ENCODE measurements at regions of chr1 and their contacts with region 1.

Region 1: DNA sequence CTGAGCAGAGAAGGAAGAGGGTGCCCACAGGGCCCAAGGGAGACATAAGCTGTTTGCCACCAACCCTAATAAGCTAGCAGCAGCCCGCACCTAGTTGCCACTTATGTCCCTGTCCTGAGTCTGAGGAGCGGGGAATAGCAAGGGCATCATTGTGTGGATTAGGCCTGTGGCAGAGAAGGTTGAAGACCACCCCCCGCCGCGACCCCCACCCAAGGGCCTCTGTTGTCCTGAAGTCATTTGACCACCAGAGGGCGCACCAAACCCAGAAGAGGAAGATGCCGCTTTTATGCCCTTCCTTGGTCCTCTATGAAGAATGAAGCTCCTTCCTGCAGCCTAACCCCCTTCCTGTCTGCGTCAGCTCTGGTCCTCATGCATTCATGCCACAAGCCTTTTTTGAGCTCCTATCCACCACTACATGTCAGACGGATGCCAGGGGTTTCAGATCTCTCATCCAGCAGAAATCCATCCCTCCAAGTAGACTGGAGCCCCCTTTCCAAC is 16.6 kb downstream of the RHBG start:
- DNase-seq: peak; percentile 58 to 86 (median 74)
- ATAC-seq: peak; percentile 93
- H3K4me3 ChIP-seq: no peak overlapping the region
- H3K4me3 Mint-ChIP-seq: no peak overlapping the region
- H3K27ac ChIP-seq: no peak overlapping the region
- H3K27ac Mint-ChIP-seq: no peak overlapping the region
- H3K4me1 ChIP-seq: peaks cover 13% of the 10 kb centered on the region
- H3K4me1 Mint-ChIP-seq: peaks cover 12% of the 10 kb centered on the region
- H3K27me3 ChIP-seq: peaks cover 16 to 18% of the 10 kb centered on the region in 2 experiments
- H3K27me3 Mint-ChIP-seq: peaks cover 39% of the 10 kb centered on the region
- CTCF ChIP-seq: peak; percentile 90

Region 2: GRCh38 chr1:155717041-155717440 is 668.5 kb before region 1 on chr1:
- CTCF ChIA-PET with region 1: no interaction called
- POLR2A ChIA-PET with region 1: no interaction called
- intact Hi-C with region 1: no loop called
- DNase-seq: no peak
- ATAC-seq: no peak
- H3K4me3 ChIP-seq: no peak overlapping the region
- H3K4me3 Mint-ChIP-seq: no peak overlapping the region
- H3K27ac ChIP-seq: no peak overlapping the region
- H3K27ac Mint-ChIP-seq: no peak overlapping the region
- H3K4me1 ChIP-seq: peaks cover 4% of the 10 kb centered on the region
- H3K4me1 Mint-ChIP-seq: peaks cover 10% of the 10 kb centered on the region
- H3K27me3 ChIP-seq: no peaks in the 10 kb centered on the region
- H3K27me3 Mint-ChIP-seq: no peaks in the 10 kb centered on the region
- CTCF ChIP-seq: no peak

Region 3: DNA sequence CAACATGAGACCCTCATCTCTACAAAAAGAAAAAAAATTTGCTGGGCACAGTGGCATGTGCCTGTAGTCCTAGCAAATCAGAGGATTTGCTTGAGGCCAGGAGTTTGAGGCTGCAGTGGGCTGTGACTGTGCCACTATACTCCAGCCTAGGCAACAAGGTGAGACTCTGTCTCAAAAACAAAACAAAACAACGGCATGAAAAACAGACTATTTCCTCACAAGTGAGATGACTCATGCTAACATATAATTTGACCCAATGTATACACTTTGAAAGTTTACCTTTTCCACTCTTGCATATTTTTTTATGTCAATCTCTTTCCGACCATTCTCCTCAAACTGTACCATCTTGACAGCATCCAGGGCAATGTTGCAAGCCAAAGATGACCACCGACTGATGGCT is 65.0 kb before region 1 on chr1:
- CTCF ChIA-PET with region 1: no interaction called
- POLR2A ChIA-PET with region 1: no interaction called
- intact Hi-C with region 1: no loop called
- DNase-seq: no peak
- ATAC-seq: no peak
- H3K4me3 ChIP-seq: no peak overlapping the region
- H3K4me3 Mint-ChIP-seq: no peak overlapping the region
- H3K27ac ChIP-seq: no peak overlapping the region
- H3K27ac Mint-ChIP-seq: no peak overlapping the region
- H3K4me1 ChIP-seq: no peaks in the 10 kb centered on the region
- H3K4me1 Mint-ChIP-seq: no peaks in the 10 kb centered on the region
- H3K27me3 ChIP-seq: no peaks in the 10 kb centered on the region
- H3K27me3 Mint-ChIP-seq: no peaks in the 10 kb centered on the region
- CTCF ChIP-seq: no peak

Region 4: DNA sequence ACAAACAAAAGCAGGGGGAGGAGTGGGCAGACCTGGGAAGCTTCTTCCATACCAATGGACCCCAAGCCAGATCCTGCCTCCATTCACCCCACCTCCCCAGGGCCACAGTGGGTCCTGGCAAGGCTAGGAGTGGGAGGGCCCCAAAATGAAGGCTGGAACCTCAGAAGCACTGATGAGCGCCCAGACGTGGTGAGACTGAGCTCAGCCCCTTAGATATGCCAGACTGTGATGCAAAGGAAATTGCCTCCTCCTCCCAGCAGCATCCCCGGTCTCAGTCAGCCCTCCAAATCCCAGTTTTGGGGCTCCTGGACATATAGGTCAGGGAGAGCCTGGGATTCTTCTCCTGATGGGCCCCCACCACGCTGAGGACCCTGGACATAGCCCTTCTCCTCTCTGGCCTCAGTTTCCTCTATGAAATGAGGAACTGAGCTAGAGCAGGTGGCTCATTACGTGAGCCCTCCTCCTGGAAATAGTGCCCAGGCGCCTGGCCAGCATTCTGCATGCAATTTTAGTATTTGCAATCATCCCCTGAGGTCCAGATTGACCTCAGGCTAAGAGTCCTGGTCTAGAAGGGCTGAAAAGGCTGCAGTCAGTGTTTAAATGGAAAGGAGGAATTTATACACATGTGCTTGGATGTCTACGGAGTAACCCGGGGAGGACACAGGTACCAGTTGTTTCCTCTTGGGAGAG is 16.9 kb after region 1 on chr1:
- CTCF ChIA-PET with region 1: no interaction called
- POLR2A ChIA-PET with region 1: no interaction called
- intact Hi-C with region 1: no loop called
- DNase-seq: no peak
- ATAC-seq: no peak
- H3K4me3 ChIP-seq: no peak overlapping the region
- H3K4me3 Mint-ChIP-seq: no peak overlapping the region
- H3K27ac ChIP-seq: no peak overlapping the region
- H3K27ac Mint-ChIP-seq: no peak overlapping the region
- H3K4me1 ChIP-seq: no peaks in the 10 kb centered on the region
- H3K4me1 Mint-ChIP-seq: no peaks in the 10 kb centered on the region
- H3K27me3 ChIP-seq: peaks cover 12 to 33% of the 10 kb centered on the region in 2 experiments
- H3K27me3 Mint-ChIP-seq: peaks cover 57% of the 10 kb centered on the region
- CTCF ChIP-seq: no peak

Region 5: DNA sequence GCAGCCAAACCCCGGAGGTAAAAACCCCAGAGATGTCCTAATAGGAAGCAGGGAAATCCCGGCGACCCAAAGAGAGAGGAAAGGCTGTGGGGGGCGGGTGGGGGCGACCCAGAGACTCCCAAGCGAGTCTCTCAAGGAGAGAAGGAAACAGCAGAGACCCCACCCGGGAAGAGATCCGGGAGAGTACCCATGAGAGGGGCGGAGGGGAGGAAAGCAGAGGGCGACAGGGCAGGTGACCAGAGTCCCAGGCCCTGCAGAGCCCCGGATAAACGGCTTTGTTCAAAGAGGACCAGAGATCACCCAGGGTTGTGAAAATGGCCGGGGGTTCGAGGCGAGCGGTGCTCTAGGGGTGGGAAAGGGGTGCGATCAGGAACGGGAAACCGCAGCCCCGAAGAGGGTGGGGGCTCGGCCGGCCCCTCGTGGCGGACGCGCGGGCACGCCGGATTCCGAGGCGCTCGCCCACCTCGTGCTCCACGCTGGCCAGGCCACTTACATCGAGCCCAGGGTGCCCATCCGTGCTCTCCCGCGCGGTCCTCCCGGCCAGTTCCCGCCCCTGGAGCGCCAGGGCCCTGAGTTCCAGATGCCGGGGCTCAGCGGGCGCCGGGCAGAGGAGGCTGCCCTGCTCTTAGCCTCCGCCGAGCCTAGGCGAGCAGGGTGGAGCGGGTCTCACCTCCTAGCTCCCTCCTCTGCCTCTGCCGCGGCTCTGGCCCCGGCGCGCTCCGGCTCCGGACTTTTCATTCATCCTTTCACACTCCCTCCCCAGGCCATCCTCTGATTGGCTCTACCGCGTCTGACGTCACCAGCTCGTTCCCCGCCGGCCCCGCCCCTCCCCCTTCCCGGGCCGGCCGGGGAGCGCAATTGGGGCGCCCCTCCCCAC is 35.7 kb after region 1 on chr1:
- CTCF ChIA-PET with region 1: interaction called, 15 read pairs
- POLR2A ChIA-PET with region 1: interaction called, 3 read pairs
- intact Hi-C with region 1: no loop called
- DNase-seq: peak; percentile 20 to 83 (median 47)
- ATAC-seq: peak; percentile 65
- H3K4me3 ChIP-seq: peak overlapping the region; percentile 65
- H3K4me3 Mint-ChIP-seq: peak overlapping the region; percentile 91
- H3K27ac ChIP-seq: no peak overlapping the region
- H3K27ac Mint-ChIP-seq: no peak overlapping the region
- H3K4me1 ChIP-seq: peaks cover 30% of the 10 kb centered on the region
- H3K4me1 Mint-ChIP-seq: peaks cover 26% of the 10 kb centered on the region
- H3K27me3 ChIP-seq: peaks cover 49 to 76% of the 10 kb centered on the region in 2 experiments
- H3K27me3 Mint-ChIP-seq: peaks cover 95% of the 10 kb centered on the region
- CTCF ChIP-seq: no peak

Region 6: GRCh38 chr1:156435545-156436141 is 50.1 kb after region 1 on chr1:
- CTCF ChIA-PET with region 1: interaction called, 40 read pairs
- POLR2A ChIA-PET with region 1: interaction called, 5 read pairs
- intact Hi-C with region 1: no loop called
- DNase-seq: peak in 7 of 14 experiments; percentile 18 to 59 (median 40)
- ATAC-seq: peak; percentile 41
- H3K4me3 ChIP-seq: peak overlapping the region; percentile 35
- H3K4me3 Mint-ChIP-seq: peak overlapping the region; percentile 84
- H3K27ac ChIP-seq: no peak overlapping the region
- H3K27ac Mint-ChIP-seq: no peak overlapping the region
- H3K4me1 ChIP-seq: peaks cover 38% of the 10 kb centered on the region
- H3K4me1 Mint-ChIP-seq: peaks cover 27% of the 10 kb centered on the region
- H3K27me3 ChIP-seq: peaks cover 77 to 95% of the 10 kb centered on the region in 2 experiments
- H3K27me3 Mint-ChIP-seq: peaks cover 97% of the 10 kb centered on the region
- CTCF ChIP-seq: no peak

Region 7: GRCh38 chr1:156445789-156446263 is 60.2 kb after region 1 on chr1:
- CTCF ChIA-PET with region 1: interaction called, 106 read pairs
- POLR2A ChIA-PET with region 1: interaction called, 31 read pairs
- intact Hi-C with region 1: loop called (anchors 1 kb)
- DNase-seq: peak; percentile 61 to 88 (median 72)
- ATAC-seq: peak; percentile 95
- H3K4me3 ChIP-seq: no peak overlapping the region
- H3K4me3 Mint-ChIP-seq: no peak overlapping the region
- H3K27ac ChIP-seq: no peak overlapping the region
- H3K27ac Mint-ChIP-seq: no peak overlapping the region
- H3K4me1 ChIP-seq: peaks cover 7% of the 10 kb centered on the region
- H3K4me1 Mint-ChIP-seq: peaks cover 9% of the 10 kb centered on the region
- H3K27me3 ChIP-seq: peaks cover 41 to 43% of the 10 kb centered on the region in 2 experiments
- H3K27me3 Mint-ChIP-seq: peaks cover 53% of the 10 kb centered on the region
- CTCF ChIP-seq: peak; percentile 90

Region 8: GRCh38 chr1:156601122-156601830 is 215.7 kb after region 1 on chr1 and contains the start of gene GPATCH4:
- CTCF ChIA-PET with region 1: interaction called, 15 read pairs
- POLR2A ChIA-PET with region 1: no interaction called
- intact Hi-C with region 1: no loop called
- DNase-seq: peak; percentile 53 to 88 (median 61)
- ATAC-seq: peak; percentile 78
- H3K4me3 ChIP-seq: peak within 1 kb of the TSS; percentile 78
- H3K4me3 Mint-ChIP-seq: peak within 1 kb of the TSS; percentile 92
- H3K27ac ChIP-seq: peak within 1 kb of the TSS; percentile 63 to 71
- H3K27ac Mint-ChIP-seq: peak within 1 kb of the TSS; percentile 73
- H3K4me1 ChIP-seq: peaks cover 32% of the 10 kb centered on the region
- H3K4me1 Mint-ChIP-seq: peaks cover 37% of the 10 kb centered on the region
- H3K27me3 ChIP-seq: no peaks in the 10 kb centered on the region
- H3K27me3 Mint-ChIP-seq: no peaks in the 10 kb centered on the region
- CTCF ChIP-seq: no peak
- total RNA-seq, gene GPATCH4: 35.3 to 36.3 TPM

Region 9: DNA sequence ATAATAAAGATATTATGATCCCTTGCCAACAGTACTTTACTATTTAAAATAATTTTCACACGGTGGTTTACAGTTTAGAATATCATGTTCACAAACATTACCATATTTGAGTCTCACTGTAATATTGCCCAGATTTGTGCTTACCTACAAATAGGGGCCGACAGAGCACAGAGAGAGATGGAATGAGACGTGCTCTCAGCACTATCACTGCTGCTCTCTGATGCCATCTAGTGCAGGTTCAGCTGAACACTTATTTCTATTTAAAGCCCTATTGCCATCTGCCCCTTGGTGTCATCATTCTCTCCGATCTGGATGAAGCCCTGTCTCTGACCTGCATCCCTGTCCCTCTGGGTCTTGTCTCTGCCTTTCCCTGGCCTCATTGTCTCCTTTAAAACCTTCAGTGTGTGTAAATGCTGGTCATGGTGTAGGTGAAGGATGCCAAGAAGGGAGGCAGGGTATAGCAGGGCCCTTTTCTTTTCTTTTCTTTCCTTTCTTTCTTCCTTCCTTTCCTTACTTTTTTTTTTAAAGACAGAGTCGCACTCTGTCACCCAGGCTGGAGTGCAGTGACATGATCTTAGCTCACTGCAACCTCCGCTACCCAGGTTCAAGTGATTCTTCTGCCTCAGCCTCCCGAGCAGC is 222.6 kb after region 1 on chr1:
- CTCF ChIA-PET with region 1: interaction called, 32 read pairs
- POLR2A ChIA-PET with region 1: no interaction called
- intact Hi-C with region 1: loop called (anchors 1 kb)
- DNase-seq: peak in 13 of 14 experiments; percentile 42 to 87 (median 53)
- ATAC-seq: peak; percentile 96
- H3K4me3 ChIP-seq: no peak overlapping the region
- H3K4me3 Mint-ChIP-seq: peak overlapping the region; percentile 72
- H3K27ac ChIP-seq: no peak overlapping the region
- H3K27ac Mint-ChIP-seq: no peak overlapping the region
- H3K4me1 ChIP-seq: peaks cover 10% of the 10 kb centered on the region
- H3K4me1 Mint-ChIP-seq: peaks cover 15% of the 10 kb centered on the region
- H3K27me3 ChIP-seq: peaks cover 0 to 5% of the 10 kb centered on the region in 2 experiments
- H3K27me3 Mint-ChIP-seq: peaks cover 21% of the 10 kb centered on the region
- CTCF ChIP-seq: peak; percentile 77

Region 10: DNA sequence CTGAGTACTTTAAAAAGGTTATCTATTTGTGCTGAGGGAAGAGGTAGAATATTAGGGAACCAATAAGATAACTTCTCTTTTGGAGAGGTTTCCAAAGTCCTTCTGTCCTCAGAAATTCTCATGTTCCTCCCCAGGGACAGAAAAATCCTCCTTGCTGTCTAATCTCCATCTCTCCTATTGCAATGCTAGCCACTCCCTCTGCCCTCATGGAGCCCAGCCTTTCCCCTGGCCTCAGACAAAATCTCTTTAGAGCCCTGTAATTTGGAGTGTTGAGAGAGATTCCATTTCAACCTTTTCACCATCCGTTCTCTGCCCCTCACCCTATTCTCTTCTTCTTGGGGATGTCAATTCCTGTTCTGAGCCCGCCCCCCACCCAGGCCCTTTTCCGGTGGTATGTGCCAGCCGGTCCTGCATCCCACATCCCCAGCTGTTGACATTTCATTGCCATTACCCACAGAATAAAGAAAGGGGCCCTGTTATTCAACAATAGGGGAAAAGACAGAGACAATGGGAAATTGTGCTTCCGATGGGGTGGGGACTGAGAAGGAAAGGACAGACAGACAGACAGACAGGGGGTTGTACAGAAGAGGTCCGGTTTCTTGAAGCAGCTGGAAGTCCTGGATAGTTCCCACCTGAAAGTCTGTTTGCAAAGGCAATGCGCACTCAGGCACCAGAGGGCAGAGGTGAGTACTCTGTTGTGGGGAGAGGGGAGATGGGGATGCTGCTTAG is 233.4 kb after region 1 on chr1 and contains the start of gene HAPLN2:
- CTCF ChIA-PET with region 1: interaction called, 13 read pairs
- POLR2A ChIA-PET with region 1: no interaction called
- intact Hi-C with region 1: no loop called
- DNase-seq: peak in 5 of 14 experiments; percentile 11 to 49 (median 39)
- ATAC-seq: peak; percentile 48
- H3K4me3 ChIP-seq: no peak within 1 kb of the TSS
- H3K4me3 Mint-ChIP-seq: no peak within 1 kb of the TSS
- H3K27ac ChIP-seq: no peak within 1 kb of the TSS
- H3K27ac Mint-ChIP-seq: no peak within 1 kb of the TSS
- H3K4me1 ChIP-seq: peaks cover 5% of the 10 kb centered on the region
- H3K4me1 Mint-ChIP-seq: no peaks in the 10 kb centered on the region
- H3K27me3 ChIP-seq: peaks cover 36% of the 10 kb centered on the region in 2 experiments
- H3K27me3 Mint-ChIP-seq: peaks cover 74% of the 10 kb centered on the region
- CTCF ChIP-seq: peak; percentile 34
- total RNA-seq, gene HAPLN2: 0.44 to 0.56 TPM

Measured in CD4-positive, alpha-beta T cell (primary cell).